ENCODE measurements at regions of chr4 and their contacts with region 1.

Region 1: GRCh38 chr4:122758033-122758432 is 25.5 kb downstream of the BBS12 start:
- DNase-seq: no peak
- H3K4me3 Mint-ChIP-seq: no peak overlapping the region
- H3K27ac Mint-ChIP-seq: no peak overlapping the region
- H3K4me1 Mint-ChIP-seq: peaks cover 22% of the 10 kb centered on the region
- H3K27me3 Mint-ChIP-seq: peaks cover 25% of the 10 kb centered on the region

Region 2: GRCh38 chr4:122747883-122748282 is 10.2 kb before region 1 on chr4:
- CTCF ChIA-PET with region 1: interaction called, 13 read pairs
- POLR2A ChIA-PET with region 1: no interaction called
- DNase-seq: no peak
- H3K4me3 Mint-ChIP-seq: no peak overlapping the region
- H3K27ac Mint-ChIP-seq: no peak overlapping the region
- H3K4me1 Mint-ChIP-seq: peaks cover 15% of the 10 kb centered on the region
- H3K27me3 Mint-ChIP-seq: peaks cover 20% of the 10 kb centered on the region